ENCODE measurements at regions of chr5 and their contacts with region 1.

Region 1: DNA sequence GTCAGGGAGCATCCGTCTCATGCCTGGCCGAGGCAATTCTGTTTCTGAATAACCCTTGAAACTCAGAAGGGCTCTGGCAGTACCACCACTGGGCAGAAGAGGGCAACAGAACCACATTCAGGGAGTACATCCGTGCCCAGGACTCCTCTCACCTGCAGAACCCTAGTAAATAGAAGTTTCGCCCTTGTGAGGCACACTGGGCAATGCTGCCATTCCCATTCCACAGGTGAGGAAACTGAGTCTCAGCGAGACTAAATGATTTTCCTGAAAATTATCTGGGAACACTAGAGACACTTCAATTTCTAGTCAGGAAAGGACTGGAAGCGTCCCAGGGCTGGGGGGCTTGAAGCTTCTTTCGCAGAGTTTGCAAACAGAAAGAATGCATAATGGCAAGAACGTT is 74.7 kb downstream of the FGF1 start:
- DNase-seq: no peak
- ATAC-seq: peak; percentile 87

Region 2: GRCh38 chr5:142655339-142656267 is 44.4 kb after region 1 on chr5:
- intact Hi-C with region 1: loop called (anchors 2 kb)
- DNase-seq: peak; percentile 93
- ATAC-seq: peak; percentile 97

Region 3: GRCh38 chr5:142699184-142699720 is 88.1 kb after region 1 on chr5:
- intact Hi-C with region 1: loop called (anchors 1 kb)
- DNase-seq: peak; percentile 89
- ATAC-seq: peak; percentile 90

Region 4: DNA sequence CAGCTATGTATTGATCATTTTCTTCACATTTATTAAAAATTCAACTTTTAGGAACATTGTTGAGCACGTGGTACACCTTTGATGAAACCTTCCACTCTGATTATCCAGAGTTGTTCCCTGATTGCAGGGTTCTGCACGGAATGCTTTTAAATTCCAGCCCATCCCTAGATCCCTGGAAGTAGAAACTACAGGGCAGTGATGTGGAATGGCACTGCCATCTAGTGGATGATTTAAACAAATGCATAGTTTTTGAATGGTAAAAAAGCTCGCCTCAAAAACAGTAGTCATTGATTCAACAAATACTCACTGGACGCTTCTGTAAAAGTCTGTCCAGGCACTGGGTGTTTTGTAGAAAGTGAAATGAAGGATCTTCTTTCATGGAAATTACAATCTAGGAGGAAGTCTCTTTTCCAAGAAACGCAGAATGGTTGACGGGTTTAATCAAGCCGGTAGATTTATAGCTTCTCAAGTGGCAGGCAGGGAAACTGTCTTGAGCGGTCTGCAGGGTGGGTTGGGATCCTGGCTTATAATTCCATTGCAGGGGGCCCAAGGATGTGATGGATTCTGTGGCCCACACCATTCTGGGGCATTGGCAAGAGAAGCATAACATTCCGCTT is 277.4 kb after region 1 on chr5:
- intact Hi-C with region 1: loop called (anchors 10 kb)
- DNase-seq: no peak
- ATAC-seq: peak; percentile 48

Region 5: DNA sequence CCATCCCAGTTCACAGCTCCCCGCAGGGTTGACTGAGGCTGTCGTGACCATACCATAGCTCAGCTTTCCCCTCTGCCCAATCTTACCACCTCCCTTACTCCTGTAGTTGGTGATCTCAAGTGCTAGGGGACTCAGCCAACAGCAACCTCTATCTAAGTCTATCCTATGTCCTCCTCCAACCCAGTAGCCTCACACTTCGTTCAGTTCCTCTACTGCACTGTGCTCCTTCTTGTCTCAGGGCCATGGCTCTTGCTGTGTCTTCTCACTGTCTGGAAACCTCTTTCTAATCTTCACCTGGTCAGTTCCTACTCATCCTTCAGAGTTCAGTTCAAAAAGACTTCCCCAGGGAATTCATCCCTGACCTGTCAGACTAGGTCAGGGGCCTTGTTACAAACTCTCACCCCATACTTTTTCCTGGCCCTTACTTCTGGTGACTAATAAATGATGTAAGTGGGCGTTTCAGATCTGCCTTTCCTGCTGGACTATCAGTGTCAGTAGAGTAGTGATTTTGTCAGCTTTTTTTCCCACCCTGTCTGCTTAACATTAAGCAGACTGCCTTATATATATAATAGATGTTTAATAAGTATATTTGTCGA is 845.9 kb after region 1 on chr5:
- intact Hi-C with region 1: no loop called
- DNase-seq: no peak
- ATAC-seq: no peak